HCT116 (cell line): ENCODE measurements at regions of chr4 and their contacts with region 1.

Region 1: GRCh38 chr4:73964862-73965611 is 16.8 kb downstream of the PF4 start:
- DNase-seq: peak; percentile 46
- ATAC-seq: peak; percentile 97
- H3K4me3 ChIP-seq: no peak overlapping the region
- H3K27ac ChIP-seq: no peak overlapping the region
- H3K4me1 ChIP-seq: peaks cover 0 to 5% of the 10 kb centered on the region in 2 experiments; a peak in 1 of 4 replicates
- H3K27me3 ChIP-seq: no peaks in the 10 kb centered on the region
- CTCF ChIP-seq: peak; percentile 27 to 68 (median 63); a peak in 5 of 6 replicates
- POLR2A ChIP-seq: no peak
- RAD21 ChIP-seq: peak; percentile 64

Region 2: DNA sequence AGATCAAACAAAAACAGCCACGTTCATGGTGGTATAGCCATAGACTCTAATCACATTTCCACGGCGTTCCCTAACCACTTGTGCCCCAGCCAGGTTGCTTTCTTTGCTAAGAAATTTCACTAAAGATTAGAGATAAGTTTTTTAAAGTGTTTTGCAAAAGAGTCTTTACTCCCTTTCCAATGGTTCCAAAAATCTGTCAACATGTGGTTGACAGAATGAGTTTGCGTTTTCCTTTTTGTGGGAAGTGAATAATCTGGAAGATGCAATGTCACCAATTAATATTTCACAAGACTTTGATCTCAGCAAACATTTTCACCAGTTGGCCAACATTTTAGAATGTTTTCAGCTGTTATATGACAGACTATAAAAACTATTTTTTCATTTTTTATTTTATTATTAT is 60.5 kb before region 1 on chr4:
- CTCF ChIA-PET with region 1: no interaction called
- POLR2A ChIA-PET with region 1: no interaction called
- RAD21 ChIA-PET with region 1: no interaction called
- intact Hi-C with region 1: no loop called
- DNase-seq: no peak
- ATAC-seq: no peak
- H3K4me3 ChIP-seq: no peak overlapping the region
- H3K27ac ChIP-seq: no peak overlapping the region
- H3K4me1 ChIP-seq: no peaks in the 10 kb centered on the region
- H3K27me3 ChIP-seq: no peaks in the 10 kb centered on the region
- CTCF ChIP-seq: no peak
- POLR2A ChIP-seq: no peak
- RAD21 ChIP-seq: no peak

Region 3: DNA sequence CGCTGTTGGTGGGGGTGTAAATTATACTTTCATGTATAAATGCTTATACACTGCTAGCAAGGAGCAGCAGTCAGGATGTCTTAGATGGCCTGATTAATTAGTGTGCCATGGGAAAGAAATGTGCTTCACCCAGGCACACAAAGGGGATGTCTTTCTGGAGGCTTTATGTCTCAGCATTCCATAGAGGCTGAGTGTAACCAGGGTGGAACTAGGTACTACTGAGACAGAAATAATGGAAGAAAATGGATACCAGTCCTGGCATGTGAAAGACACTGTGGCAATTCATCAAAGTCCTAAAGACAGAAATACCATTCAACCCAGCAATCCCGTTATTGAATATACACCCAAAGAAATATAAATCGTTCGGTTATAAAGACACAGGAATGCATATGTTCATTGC is 35.8 kb before region 1 on chr4:
- CTCF ChIA-PET with region 1: no interaction called
- POLR2A ChIA-PET with region 1: no interaction called
- RAD21 ChIA-PET with region 1: no interaction called
- intact Hi-C with region 1: loop called (anchors 1 kb)
- DNase-seq: no peak
- ATAC-seq: no peak
- H3K4me3 ChIP-seq: no peak overlapping the region
- H3K27ac ChIP-seq: no peak overlapping the region
- H3K4me1 ChIP-seq: no peaks in the 10 kb centered on the region
- H3K27me3 ChIP-seq: no peaks in the 10 kb centered on the region
- CTCF ChIP-seq: no peak
- POLR2A ChIP-seq: no peak
- RAD21 ChIP-seq: no peak